GM18951 (cell line): ENCODE measurements at regions of chr3 and their contacts with region 1.

Region 1: GRCh38 chr3:71006810-71007785 is 576.4 kb downstream of the FOXP1 start:
- POLR2A ChIP-seq: no peak

Region 2: DNA sequence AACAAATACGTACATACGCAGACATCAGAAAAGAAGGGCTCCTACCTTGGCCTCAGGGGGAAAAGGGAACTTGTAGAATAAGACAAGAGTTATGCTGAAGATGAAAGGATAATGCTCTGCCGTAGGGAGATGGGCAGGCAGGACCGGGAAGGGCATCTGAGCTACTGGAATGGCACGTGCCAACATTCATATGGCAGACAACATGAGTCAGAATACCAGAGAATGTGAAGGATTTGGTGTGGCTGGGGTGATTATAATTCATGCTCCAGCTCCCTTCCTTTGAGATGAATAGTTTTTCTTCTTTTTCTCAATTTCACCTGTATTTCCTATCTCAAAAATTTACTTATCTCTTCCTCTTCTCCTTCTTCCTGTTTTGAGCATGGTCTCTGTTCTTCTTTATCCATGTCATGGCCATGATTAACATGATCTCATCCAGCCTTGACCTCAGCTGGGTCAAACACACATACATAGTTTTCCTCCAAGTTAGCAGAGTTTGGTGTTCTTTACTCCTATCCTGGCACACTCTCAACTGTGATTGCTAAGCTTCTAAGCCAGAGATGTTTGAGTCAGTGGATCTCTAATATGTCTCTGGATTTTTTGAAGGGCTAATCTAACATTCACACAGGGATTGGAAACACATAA is 69.4 kb after region 1 on chr3:
- in situ Hi-C with region 1: no loop called
- POLR2A ChIP-seq: no peak

Region 3: GRCh38 chr3:71583566-71584449 is 576.7 kb after region 1 on chr3 and contains the start of gene FOXP1:
- in situ Hi-C with region 1: loop called (anchors 25 kb)
- POLR2A ChIP-seq: no peak